Activated CD4-positive, alpha-beta memory T cell treated with anti-CD3 and anti-CD28 coated beads for 36 hours (primary cell): ENCODE measurements at regions of chr15 and their contacts with region 1.

Region 1: DNA sequence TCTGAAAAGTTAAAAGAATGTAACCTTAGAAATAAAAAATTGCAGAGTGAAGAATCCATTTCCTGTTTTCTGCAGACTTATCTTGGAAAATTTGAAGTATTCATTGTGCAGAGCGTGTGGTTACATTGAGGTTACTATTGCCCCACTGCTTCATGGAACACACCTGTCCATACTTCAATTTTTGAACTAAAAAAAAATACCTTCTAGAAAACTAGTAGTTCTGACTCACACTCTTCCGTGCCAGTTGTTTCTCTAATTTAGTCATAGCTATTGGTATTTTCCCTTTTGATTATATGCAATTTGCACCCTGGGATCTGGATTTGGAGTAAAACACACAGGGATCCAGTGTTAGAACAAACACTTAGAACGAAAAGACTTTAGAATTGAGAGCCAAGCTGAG is 111.8 kb upstream of the LYSMD4 start:
- DNase-seq: peak; percentile 42
- H3K4me3 Mint-ChIP-seq: no peak overlapping the region
- H3K27ac Mint-ChIP-seq: peak overlapping the region; percentile 46
- H3K4me1 Mint-ChIP-seq: peaks cover 49% of the 10 kb centered on the region
- H3K27me3 Mint-ChIP-seq: no peaks in the 10 kb centered on the region

Region 2: GRCh38 chr15:99826157-99826780 is 18.7 kb before region 1 on chr15:
- CTCF ChIA-PET with region 1: no interaction called
- POLR2A ChIA-PET with region 1: interaction called, 5 read pairs
- intact Hi-C with region 1: loop called (anchors 1 kb)
- DNase-seq: peak; percentile 43
- H3K4me3 Mint-ChIP-seq: peak overlapping the region; percentile 41
- H3K27ac Mint-ChIP-seq: peak overlapping the region; percentile 95
- H3K4me1 Mint-ChIP-seq: peaks cover 52% of the 10 kb centered on the region
- H3K27me3 Mint-ChIP-seq: no peaks in the 10 kb centered on the region

Region 3: GRCh38 chr15:99998641-99999101 is 153.7 kb after region 1 on chr15:
- CTCF ChIA-PET with region 1: no interaction called
- POLR2A ChIA-PET with region 1: no interaction called
- intact Hi-C with region 1: no loop called
- DNase-seq: no peak
- H3K4me3 Mint-ChIP-seq: no peak overlapping the region
- H3K27ac Mint-ChIP-seq: no peak overlapping the region
- H3K4me1 Mint-ChIP-seq: peaks cover 2% of the 10 kb centered on the region
- H3K27me3 Mint-ChIP-seq: no peaks in the 10 kb centered on the region